ENCODE measurements at regions of chr11 and their contacts with region 1.

Region 1: GRCh38 chr11:59550368-59550841 is 39.1 kb downstream of the OR4D9 start:
- DNase-seq: peak; percentile 62 to 83 (median 78)
- ATAC-seq: peak; percentile 74 to 91 (median 86)
- H3K4me3 ChIP-seq: peak overlapping the region; percentile 24 to 68 (median 56)
- H3K27ac ChIP-seq: peak overlapping the region; percentile 43 to 89 (median 80)
- H3K4me1 ChIP-seq: peaks cover 0 to 44% (median 0%) of the 10 kb centered on the region in 12 donors
- H3K27me3 ChIP-seq: peaks cover 0 to 2% (median 0%) of the 10 kb centered on the region in 9 donors
- CTCF ChIP-seq: peak; percentile 19 to 62 (median 40)
- POLR2A ChIP-seq: no peak

Region 2: GRCh38 chr11:59560702-59561469 is 10.5 kb after region 1 on chr11:
- intact Hi-C with region 1: loop called in 2 of 10 experiments (anchors 1 kb)
- DNase-seq: peak; percentile 88 to 91 (median 90)
- ATAC-seq: peak; percentile 83 to 92 (median 88)
- H3K4me3 ChIP-seq: peak overlapping the region; percentile 70 to 96 (median 84)
- H3K27ac ChIP-seq: peak overlapping the region; percentile 59 to 92 (median 82)
- H3K4me1 ChIP-seq: peaks cover 0 to 37% (median 7%) of the 10 kb centered on the region in 12 donors
- H3K27me3 ChIP-seq: no peaks in the 10 kb centered on the region
- CTCF ChIP-seq: no peak
- POLR2A ChIP-seq: peak in 1 of 2 donors; percentile 24

Measured in heart left ventricle (tissue), 16 donors.